ENCODE measurements at regions of chr2 and their contacts with region 1.

Region 1: GRCh38 chr2:190947711-190948251 is 66.2 kb downstream of the STAT1 start:
- DNase-seq: peak; percentile 43
- H3K4me3 Mint-ChIP-seq: peak overlapping the region; percentile 25
- H3K27ac Mint-ChIP-seq: no peak overlapping the region
- H3K4me1 Mint-ChIP-seq: peaks cover 8% of the 10 kb centered on the region
- H3K27me3 Mint-ChIP-seq: no peaks in the 10 kb centered on the region
- CTCF ChIP-seq: no peak

Region 2: GRCh38 chr2:190744041-190744440 is 203.7 kb before region 1 on chr2:
- CTCF ChIA-PET with region 1: no interaction called
- intact Hi-C with region 1: no loop called
- DNase-seq: no peak
- H3K4me3 Mint-ChIP-seq: no peak overlapping the region
- H3K27ac Mint-ChIP-seq: no peak overlapping the region
- H3K4me1 Mint-ChIP-seq: peaks cover 8% of the 10 kb centered on the region
- H3K27me3 Mint-ChIP-seq: no peaks in the 10 kb centered on the region
- CTCF ChIP-seq: no peak

Region 3: DNA sequence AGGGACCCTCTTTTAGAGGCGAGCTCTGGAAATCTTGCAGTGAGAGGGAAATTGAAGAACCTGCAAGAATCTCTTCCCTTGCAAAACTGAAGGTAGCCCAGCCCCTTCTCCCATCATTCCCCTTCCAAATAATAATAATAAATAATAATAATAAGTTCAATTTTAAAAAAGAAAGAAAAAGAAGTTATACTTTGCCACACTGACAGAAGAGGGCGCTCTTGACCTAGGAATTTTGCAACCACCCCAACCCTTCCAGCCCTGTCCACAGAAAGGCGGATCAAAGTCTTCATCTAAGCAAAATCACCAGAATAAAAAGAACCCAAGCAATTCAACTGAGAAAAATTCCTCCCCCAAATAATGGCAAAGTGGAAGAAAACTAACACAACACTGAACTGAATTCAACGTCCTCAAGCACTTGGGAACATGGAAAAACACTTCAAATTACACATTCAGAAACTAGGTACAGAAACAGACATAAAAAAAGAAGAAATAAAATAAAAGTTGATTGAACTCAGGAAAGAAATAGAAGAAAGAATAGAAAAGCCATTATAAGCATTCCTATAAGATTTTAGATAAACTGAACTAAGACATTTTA is 166.1 kb before region 1 on chr2:
- CTCF ChIA-PET with region 1: interaction called, 5 read pairs
- intact Hi-C with region 1: loop called (anchors 5 kb)
- DNase-seq: peak; percentile 69
- H3K4me3 Mint-ChIP-seq: no peak overlapping the region
- H3K27ac Mint-ChIP-seq: no peak overlapping the region
- H3K4me1 Mint-ChIP-seq: peaks cover 13% of the 10 kb centered on the region
- H3K27me3 Mint-ChIP-seq: peaks cover 8% of the 10 kb centered on the region
- CTCF ChIP-seq: peak; percentile 77

Region 4: DNA sequence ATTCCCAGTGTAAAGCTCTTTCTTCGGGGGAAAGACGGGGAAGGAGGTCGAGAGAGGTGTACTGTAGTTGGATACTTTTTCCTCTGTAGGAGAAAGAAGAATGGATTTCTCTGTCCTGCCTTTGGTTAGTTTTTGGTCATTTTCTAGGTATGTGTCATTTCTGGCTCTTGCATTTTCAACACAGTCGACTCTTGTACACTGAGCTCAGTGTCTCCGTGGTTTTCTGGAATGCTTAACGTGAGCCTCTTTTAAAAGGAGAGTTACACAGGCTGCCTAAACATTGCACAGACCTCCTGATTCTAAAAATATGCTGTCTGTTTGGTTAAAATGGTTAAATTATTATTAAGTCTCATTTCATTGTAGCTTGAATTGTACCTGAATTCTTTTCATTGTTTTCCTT is 89.0 kb before region 1 on chr2:
- CTCF ChIA-PET with region 1: interaction called, 7 read pairs
- intact Hi-C with region 1: loop called (anchors 2 kb)
- DNase-seq: no peak
- H3K4me3 Mint-ChIP-seq: no peak overlapping the region
- H3K27ac Mint-ChIP-seq: peak overlapping the region; percentile 53
- H3K4me1 Mint-ChIP-seq: peaks cover 31% of the 10 kb centered on the region
- H3K27me3 Mint-ChIP-seq: no peaks in the 10 kb centered on the region
- CTCF ChIP-seq: no peak

Region 5: GRCh38 chr2:190880378-190881073 is 67.3 kb before region 1 on chr2 and contains the start of gene GLS:
- CTCF ChIA-PET with region 1: interaction called, 5 read pairs
- intact Hi-C with region 1: loop called (anchors 5 kb)
- DNase-seq: peak; percentile 96
- H3K4me3 Mint-ChIP-seq: peak within 1 kb of the TSS; percentile 97
- H3K27ac Mint-ChIP-seq: peak within 1 kb of the TSS; percentile 100
- H3K4me1 Mint-ChIP-seq: peaks cover 19% of the 10 kb centered on the region
- H3K27me3 Mint-ChIP-seq: no peaks in the 10 kb centered on the region
- CTCF ChIP-seq: no peak
- total RNA-seq, gene GLS: 110 and 115 TPM in 2 replicates

Measured in Calu3 (cell line).